Ascending aorta (tissue), 2 donors: ENCODE measurements at regions of chr7 and their contacts with region 1.

Region 1: GRCh38 chr7:102991540-102992214 is 78.9 kb downstream of the LRRC17 start:
- DNase-seq: peak in 1 of 2 donors; percentile 84
- H3K4me3 ChIP-seq: no peak overlapping the region
- H3K27ac ChIP-seq: peak overlapping the region; percentile 81 to 92
- H3K4me1 ChIP-seq: peaks cover 14 to 41% of the 10 kb centered on the region in 2 donors
- H3K27me3 ChIP-seq: no peaks in the 10 kb centered on the region
- CTCF ChIP-seq: no peak

Region 2: GRCh38 chr7:102874166-102874829 is 117.4 kb before region 1 on chr7:
- intact Hi-C with region 1: loop called (anchors 5 kb)
- DNase-seq: no peak
- H3K4me3 ChIP-seq: no peak overlapping the region
- H3K27ac ChIP-seq: peak overlapping the region; percentile 59 to 74
- H3K4me1 ChIP-seq: peaks cover 5 to 26% of the 10 kb centered on the region in 2 donors
- H3K27me3 ChIP-seq: no peaks in the 10 kb centered on the region
- CTCF ChIP-seq: no peak

Region 3: DNA sequence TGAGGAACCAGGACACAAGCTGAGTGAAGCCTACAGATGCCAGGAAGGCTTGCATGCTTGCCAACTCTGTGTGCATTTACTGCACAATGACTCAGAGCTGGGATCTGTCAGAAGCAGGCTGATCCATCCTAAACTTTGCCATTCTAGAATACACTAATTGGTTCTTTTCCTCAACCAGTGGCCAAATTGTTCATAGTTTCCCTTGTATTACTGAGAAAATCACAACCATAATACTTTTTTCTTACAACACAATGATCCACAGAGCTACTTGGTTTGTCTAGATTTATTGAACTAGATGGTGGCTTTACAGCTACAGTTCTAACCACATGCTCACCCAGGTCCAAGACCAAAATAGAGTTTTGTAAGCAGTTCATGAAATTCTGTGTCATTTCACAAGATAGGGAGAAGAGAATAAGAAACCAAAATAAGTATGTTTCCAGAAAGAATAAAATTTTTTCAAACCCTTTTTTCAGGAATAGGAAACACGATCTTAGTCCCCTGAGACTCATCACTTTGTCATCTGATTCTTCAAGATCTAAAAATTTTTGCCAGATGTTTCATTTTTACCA is 99.9 kb before region 1 on chr7:
- intact Hi-C with region 1: loop called (anchors 2 kb)
- DNase-seq: peak; percentile 16 to 85
- H3K4me3 ChIP-seq: no peak overlapping the region
- H3K27ac ChIP-seq: peak overlapping the region; percentile 14 to 39
- H3K4me1 ChIP-seq: peaks cover 9 to 55% of the 10 kb centered on the region in 2 donors
- H3K27me3 ChIP-seq: no peaks in the 10 kb centered on the region
- CTCF ChIP-seq: no peak

Region 4: DNA sequence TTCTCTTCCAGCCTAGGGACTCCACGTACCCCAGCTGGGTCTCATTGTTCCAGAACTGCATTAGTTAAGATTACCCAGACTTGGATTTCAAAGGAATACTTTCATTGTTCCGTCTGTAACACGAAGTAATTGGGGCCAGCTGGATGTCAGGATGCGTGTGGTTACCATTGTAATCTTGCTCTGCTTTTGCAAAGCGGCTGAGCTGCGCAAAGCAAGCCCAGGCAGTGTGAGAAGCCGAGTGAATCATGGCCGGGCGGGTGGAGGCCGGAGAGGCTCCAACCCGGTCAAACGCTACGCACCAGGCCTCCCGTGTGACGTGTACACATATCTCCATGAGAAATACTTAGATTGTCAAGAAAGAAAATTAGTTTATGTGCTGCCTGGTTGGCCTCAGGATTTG is 57.9 kb before region 1 on chr7:
- intact Hi-C with region 1: loop called (anchors 2 kb)
- DNase-seq: peak; percentile 37 to 92
- H3K4me3 ChIP-seq: peak overlapping the region in 1 of 2 donors; percentile 37
- H3K27ac ChIP-seq: peak overlapping the region; percentile 81 to 88
- H3K4me1 ChIP-seq: peaks cover 3 to 31% of the 10 kb centered on the region in 2 donors
- H3K27me3 ChIP-seq: no peaks in the 10 kb centered on the region
- CTCF ChIP-seq: no peak

Region 5: DNA sequence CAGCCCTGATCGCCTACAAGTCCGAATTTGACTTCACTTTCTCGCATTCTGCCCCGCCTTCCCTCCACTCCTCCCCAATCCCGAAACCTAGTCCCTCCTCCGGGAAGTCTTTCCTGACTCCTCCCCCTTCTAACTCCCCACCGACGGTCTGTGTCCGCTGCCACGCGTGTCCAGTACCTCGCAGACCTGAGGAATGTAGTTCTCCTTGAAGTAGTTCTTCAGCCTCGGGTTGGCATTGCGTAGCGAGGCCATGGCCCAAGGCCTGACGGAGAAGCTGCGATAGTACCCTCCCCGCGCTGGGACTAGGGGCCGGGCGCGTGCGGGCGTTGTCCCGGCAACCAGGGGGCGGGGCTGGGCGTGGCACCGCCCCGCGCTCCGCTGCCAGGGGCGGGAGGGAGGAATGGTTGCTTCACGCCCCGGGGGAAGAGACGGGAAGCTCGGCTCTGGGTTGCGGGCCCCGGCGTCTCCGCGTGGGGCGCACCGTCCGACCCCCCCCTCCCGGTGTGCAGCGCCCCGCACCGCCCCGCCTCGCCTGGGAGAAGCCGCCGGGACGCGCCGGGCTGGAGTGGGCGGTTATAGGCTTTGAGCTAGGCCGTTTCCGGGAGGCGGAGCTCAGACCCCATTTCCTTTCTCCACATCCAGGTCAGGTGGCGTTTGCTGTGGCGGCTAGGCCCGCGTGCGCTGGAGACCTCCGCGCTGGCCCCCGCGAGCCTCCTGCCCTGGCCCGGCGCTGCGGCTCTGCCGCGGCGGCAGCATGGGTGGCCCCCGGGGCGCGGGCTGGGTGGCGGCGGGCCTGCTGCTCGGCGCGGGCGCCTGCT is 83.1 kb after region 1 on chr7 and contains the starts of genes ARMC10 and FBXL13:
- intact Hi-C with region 1: loop called (anchors 2 kb)
- DNase-seq: peak; percentile 55 to 95
- H3K4me3 ChIP-seq: peak within 1 kb of the TSS; percentile 81 to 92
- H3K27ac ChIP-seq: peak within 1 kb of the TSS; percentile 93 to 97
- H3K4me1 ChIP-seq: peaks cover 0 to 13% of the 10 kb centered on the region in 2 donors
- H3K27me3 ChIP-seq: no peaks in the 10 kb centered on the region
- CTCF ChIP-seq: peak; percentile 19 to 48 (median 41)
- total RNA-seq, gene ARMC10: 66.4 TPM
- total RNA-seq, gene FBXL13: 0.75 TPM

Region 6: GRCh38 chr7:103154042-103154441 is 162.4 kb after region 1 on chr7:
- intact Hi-C with region 1: no loop called
- DNase-seq: no peak
- H3K4me3 ChIP-seq: no peak overlapping the region
- H3K27ac ChIP-seq: no peak overlapping the region
- H3K4me1 ChIP-seq: no peaks in the 10 kb centered on the region
- H3K27me3 ChIP-seq: no peaks in the 10 kb centered on the region
- CTCF ChIP-seq: no peak

Region 7: DNA sequence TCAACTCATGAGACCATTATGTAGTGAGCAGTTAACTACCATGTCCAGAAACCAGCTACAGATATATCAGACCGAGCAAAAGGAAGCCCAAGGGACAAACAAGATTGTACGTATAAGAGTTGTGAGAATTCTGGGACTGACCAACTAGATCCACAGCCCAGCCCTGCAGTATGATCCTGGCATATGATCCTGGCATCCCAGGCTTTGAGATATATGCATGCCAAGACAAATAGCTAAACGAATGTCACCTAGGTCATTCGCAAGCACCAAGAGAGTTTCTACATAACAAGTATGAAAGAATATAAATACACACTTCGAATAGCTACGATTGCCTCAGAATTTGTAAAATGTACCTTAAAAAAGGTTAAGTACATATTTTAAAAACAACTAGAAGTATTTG is 249.1 kb after region 1 on chr7:
- intact Hi-C with region 1: no loop called
- DNase-seq: no peak
- H3K4me3 ChIP-seq: no peak overlapping the region
- H3K27ac ChIP-seq: no peak overlapping the region
- H3K4me1 ChIP-seq: no peaks in the 10 kb centered on the region
- H3K27me3 ChIP-seq: no peaks in the 10 kb centered on the region
- CTCF ChIP-seq: no peak

Region 8: GRCh38 chr7:103735377-103735776 is 743.7 kb after region 1 on chr7:
- intact Hi-C with region 1: no loop called
- DNase-seq: no peak
- H3K4me3 ChIP-seq: no peak overlapping the region
- H3K27ac ChIP-seq: no peak overlapping the region
- H3K4me1 ChIP-seq: no peaks in the 10 kb centered on the region
- H3K27me3 ChIP-seq: no peaks in the 10 kb centered on the region
- CTCF ChIP-seq: no peak